Activated CD4-positive, alpha-beta memory T cell treated with anti-CD3 and anti-CD28 coated beads for 36 hours (primary cell): ENCODE measurements at regions of chr9 and their contacts with region 1.

Region 1: DNA sequence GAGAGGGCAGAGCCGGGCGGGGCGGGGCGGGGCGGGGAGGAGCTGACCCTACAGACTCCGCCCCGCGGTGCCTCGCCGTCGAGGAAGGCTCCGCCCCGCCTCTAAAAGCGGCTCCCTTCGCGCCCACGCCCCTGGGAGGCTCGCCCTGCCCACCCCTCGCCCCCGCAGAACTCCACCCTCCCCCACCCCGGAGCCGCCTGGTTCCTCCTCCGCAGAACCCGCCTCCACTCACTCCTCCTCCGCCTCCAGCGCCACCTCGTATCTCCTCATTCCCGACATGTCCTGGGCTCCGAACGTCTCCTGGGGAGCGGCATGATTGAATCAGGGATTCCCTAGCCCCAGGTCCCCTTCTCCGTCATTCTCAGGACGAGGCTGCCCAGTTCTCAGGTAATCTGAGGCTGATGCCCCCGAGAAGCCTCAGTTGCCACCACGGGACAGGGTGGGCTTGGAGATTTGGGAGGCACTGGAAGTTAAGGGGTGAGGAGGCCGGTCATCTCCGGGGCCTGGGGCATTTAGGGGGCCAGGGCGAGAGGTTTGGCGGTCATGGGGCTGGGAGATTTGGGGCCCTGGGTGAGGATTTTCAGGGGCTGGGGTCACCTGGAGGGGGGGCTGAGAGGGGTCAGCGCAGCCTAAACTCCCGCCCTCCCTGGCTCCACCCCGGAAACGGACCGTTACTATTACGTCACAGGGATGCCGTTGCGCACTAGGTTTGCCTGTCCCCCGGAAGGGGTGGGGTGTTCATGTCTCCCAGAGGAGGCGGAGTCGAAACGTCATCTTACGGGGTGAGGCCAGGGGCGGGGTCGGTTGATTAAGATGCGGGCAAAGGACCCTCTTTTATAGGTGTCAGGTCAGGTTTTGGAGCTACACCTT is 3.2 kb upstream of the CCL27 start:
- DNase-seq: peak; percentile 93
- H3K4me3 Mint-ChIP-seq: peak overlapping the region; percentile 78
- H3K27ac Mint-ChIP-seq: peak overlapping the region; percentile 85
- H3K4me1 Mint-ChIP-seq: peaks cover 47% of the 10 kb centered on the region
- H3K27me3 Mint-ChIP-seq: no peaks in the 10 kb centered on the region

Region 2: DNA sequence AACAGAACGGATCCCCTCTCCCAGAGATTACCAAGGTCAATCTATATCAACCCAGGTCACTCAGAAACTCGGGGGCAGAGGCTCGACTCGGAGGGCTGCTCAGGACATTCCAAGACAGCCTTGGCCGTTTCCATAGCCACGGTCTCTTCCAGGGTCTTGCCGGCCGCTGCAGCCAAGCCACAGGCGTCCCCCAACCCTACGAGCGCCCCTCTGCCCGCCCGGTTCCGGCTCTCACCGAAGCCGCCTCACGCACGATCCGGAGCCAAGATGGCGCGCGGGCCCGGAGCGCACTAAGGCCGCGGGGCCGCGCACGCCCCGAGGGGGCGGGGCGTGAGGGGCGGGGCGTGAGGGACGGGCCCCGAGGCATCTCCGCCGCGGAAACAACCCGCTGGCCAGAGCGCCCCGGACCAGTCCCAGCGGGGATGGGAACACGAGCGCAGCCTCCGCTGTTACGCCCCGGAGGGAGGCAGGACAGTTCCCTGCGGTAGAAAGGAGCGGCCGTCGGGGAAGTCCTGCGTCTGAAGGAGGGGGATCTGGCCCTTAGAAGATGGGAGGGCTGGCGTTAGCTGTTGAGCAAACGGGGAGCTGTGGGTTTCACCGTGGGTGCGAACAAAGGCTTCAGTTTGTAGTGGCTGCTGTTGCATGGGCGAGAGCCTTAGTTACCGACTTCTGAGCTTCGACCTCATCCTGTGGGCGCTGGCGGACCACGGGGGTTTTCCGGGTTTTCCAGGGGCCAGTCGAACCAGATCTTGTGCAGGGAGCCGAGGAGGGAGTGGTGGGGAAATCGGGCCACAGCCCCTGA is 53.6 kb before region 1 on chr9 and contains the start of gene RPP25L:
- CTCF ChIA-PET with region 1: no interaction called
- POLR2A ChIA-PET with region 1: no interaction called
- intact Hi-C with region 1: loop called (anchors 2 kb)
- DNase-seq: peak; percentile 88
- H3K4me3 Mint-ChIP-seq: peak within 1 kb of the TSS; percentile 89
- H3K27ac Mint-ChIP-seq: peak within 1 kb of the TSS; percentile 85
- H3K4me1 Mint-ChIP-seq: peaks cover 21% of the 10 kb centered on the region
- H3K27me3 Mint-ChIP-seq: no peaks in the 10 kb centered on the region
- total RNA-seq, gene RPP25L: 29.3 to 31.1 TPM

Region 3: DNA sequence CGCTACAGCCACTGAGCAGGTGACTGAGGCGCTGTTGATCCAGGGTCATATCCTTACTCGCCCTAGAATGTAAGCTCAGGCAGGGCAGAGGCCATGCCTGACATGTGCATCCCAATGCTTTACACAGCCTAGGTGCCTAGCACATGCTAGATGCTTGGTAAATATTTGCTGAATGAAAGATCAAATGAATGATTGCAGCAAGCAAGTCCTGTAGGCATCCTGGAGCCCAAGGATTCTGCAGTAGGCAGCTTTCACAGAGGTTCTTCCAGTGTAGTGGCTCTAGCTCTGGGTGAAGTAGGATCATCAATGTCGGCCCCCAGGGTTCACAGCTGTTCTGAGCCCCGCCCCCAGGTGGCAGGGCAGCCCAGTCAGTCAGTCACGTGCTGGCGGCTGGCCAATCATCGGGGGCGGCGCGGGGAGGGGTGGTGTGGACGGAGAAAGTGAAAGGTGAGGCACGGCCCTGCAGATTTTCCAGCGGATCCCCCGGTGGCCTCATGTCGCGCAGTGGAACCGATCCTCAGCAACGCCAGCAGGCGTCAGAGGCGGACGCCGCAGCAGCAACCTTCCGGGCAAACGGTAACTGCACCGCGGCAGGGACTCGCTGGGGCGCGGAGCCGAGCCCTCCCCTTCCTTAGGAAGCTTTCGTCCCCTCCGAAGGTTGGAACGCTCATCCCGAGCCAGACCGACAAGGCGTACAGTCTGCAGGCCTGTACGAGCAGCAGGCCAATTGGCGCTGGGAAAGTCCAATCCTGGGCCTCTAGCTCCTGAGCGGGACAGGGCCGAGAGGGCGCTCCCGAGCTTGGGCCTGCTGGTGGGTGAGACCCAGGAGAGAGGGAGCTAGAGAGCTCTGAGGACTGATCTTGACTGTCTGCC is 19.2 kb before region 1 on chr9 and contains the start of gene GALT:
- CTCF ChIA-PET with region 1: interaction called, 37 read pairs
- POLR2A ChIA-PET with region 1: interaction called, 5 read pairs
- intact Hi-C with region 1: loop called (anchors 1 kb)
- DNase-seq: peak; percentile 99
- H3K4me3 Mint-ChIP-seq: peak within 1 kb of the TSS; percentile 86
- H3K27ac Mint-ChIP-seq: peak within 1 kb of the TSS; percentile 84
- H3K4me1 Mint-ChIP-seq: peaks cover 28% of the 10 kb centered on the region
- H3K27me3 Mint-ChIP-seq: no peaks in the 10 kb centered on the region
- total RNA-seq, gene GALT: 56.0 to 59.2 TPM

Region 4: GRCh38 chr9:34741628-34742027 is 76.0 kb after region 1 on chr9:
- CTCF ChIA-PET with region 1: no interaction called
- POLR2A ChIA-PET with region 1: no interaction called
- intact Hi-C with region 1: loop called (anchors 2 kb)
- DNase-seq: no peak
- H3K4me3 Mint-ChIP-seq: no peak overlapping the region
- H3K27ac Mint-ChIP-seq: no peak overlapping the region
- H3K4me1 Mint-ChIP-seq: peaks cover 4% of the 10 kb centered on the region
- H3K27me3 Mint-ChIP-seq: peaks cover 12% of the 10 kb centered on the region

Region 5: DNA sequence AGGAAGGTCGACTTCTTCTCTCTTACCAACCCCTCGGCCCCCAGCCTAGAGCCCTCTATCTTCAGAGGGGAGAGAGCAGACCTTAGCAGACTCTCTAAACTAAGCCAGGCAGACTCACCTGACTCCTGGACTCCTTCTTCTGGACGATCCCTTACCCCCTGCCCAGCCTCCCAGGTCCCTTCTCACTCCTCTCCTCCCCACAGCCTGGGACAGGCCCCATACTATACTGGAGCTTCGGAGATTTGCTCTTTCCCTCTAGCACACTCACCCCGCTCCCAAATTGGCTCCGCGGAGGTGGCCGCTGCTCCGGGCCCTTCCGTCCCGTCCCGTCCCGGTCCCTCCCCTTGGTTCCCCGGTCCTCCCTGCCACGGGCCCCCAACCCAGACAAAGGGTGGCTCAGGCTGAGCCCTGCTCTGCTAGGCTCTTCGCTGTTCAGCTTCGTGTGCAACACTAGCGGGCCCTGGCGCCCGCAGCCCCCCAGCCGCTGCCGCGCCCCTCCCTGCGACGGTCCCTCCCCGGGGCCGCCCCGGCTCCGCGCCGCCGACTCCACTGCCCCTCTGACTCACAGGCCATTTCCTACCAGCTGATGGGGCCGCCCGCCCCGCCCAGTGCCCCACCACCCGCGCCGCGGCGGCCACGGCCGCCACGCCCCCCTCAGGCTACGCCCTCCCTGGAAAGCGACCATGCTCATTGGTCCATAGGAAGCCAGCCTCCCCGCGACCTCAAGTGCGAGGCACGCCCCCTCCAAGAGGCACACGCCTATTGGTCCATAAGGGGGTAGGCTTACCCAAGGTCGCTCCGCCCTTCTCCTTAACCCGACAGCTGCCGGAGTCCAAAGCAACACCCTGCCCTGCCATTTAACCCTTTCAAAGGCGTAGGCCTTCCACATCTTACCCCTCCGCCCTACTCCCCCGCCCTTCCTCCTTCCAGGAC is 445.7 kb after region 1 on chr9:
- CTCF ChIA-PET with region 1: interaction called, 3 read pairs
- POLR2A ChIA-PET with region 1: no interaction called
- intact Hi-C with region 1: loop called (anchors 5 kb)
- DNase-seq: peak; percentile 98
- H3K4me3 Mint-ChIP-seq: peak overlapping the region; percentile 75
- H3K27ac Mint-ChIP-seq: peak overlapping the region; percentile 81
- H3K4me1 Mint-ChIP-seq: peaks cover 42% of the 10 kb centered on the region
- H3K27me3 Mint-ChIP-seq: no peaks in the 10 kb centered on the region